ENCODE measurements at regions of chr4 and their contacts with region 1.

Region 1: DNA sequence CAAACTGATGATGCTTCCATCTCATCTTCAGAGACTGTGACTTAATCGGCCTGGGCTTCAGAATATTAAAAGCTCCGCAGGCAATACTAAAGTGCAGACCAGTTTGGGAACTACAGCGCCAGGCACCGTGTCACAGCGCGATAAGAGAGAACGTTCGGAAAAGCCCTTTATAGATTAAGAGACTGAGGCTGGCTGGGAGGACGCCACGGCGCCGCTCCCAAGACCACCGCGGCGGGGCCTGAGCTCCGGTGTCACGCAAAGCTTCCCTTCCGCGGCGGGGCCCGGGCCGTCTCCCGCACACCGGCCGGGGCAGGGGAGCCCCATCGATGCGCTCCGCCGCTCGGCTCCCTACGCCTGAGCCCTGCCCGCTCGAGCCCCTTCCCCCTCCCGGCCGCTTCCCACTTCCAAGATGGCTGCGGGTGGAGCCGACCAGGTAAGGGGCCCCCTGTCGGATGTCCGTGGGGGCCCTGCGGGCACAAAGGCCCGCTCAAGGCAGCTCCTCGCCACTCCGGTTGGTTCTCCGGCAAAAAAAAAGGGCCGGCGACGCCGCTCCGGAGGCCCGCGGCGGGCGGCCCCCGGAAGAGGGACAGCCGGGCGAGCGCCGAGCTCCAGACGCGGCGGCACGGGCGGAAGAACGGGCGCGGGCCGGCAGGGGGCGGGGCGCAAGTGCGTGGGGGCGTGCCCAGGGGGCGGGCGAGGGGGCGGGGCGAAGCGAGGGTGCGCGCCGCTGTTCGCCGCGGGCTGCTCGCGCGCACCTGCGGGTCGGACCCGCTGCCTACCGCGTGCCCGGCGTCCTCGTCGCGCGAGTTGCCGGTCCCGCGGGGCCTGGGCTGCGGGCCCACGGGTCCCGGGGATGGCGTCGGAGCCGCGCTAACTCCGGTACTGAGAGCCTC is at the start of gene TBC1D14:
- DNase-seq: peak; percentile 93
- ATAC-seq: peak; percentile 86
- H3K4me3 Mint-ChIP-seq: peak within 1 kb of the TSS; percentile 94
- H3K27ac Mint-ChIP-seq: peak within 1 kb of the TSS; percentile 95
- H3K4me1 Mint-ChIP-seq: peaks cover 36% of the 10 kb centered on the region
- H3K27me3 Mint-ChIP-seq: peaks cover 6% of the 10 kb centered on the region
- total RNA-seq, gene TBC1D14: 44.5 to 52.3 TPM

Region 2: GRCh38 chr4:6716018-6716911 is 193.1 kb before region 1 on chr4 and contains the start of gene BLOC1S4:
- POLR2A ChIA-PET with region 1: interaction called, 19 read pairs
- DNase-seq: peak; percentile 95
- ATAC-seq: peak; percentile 80
- H3K4me3 Mint-ChIP-seq: peak within 1 kb of the TSS; percentile 90
- H3K27ac Mint-ChIP-seq: peak within 1 kb of the TSS; percentile 95
- H3K4me1 Mint-ChIP-seq: peaks cover 25% of the 10 kb centered on the region
- H3K27me3 Mint-ChIP-seq: peaks cover 2% of the 10 kb centered on the region
- total RNA-seq, gene BLOC1S4: 23.9 to 24.3 TPM

Region 3: GRCh38 chr4:6840062-6840976 is 69.0 kb before region 1 on chr4:
- POLR2A ChIA-PET with region 1: no interaction called
- DNase-seq: no peak
- ATAC-seq: no peak
- H3K4me3 Mint-ChIP-seq: no peak overlapping the region
- H3K27ac Mint-ChIP-seq: no peak overlapping the region
- H3K4me1 Mint-ChIP-seq: peaks cover 2% of the 10 kb centered on the region
- H3K27me3 Mint-ChIP-seq: no peaks in the 10 kb centered on the region

Region 4: DNA sequence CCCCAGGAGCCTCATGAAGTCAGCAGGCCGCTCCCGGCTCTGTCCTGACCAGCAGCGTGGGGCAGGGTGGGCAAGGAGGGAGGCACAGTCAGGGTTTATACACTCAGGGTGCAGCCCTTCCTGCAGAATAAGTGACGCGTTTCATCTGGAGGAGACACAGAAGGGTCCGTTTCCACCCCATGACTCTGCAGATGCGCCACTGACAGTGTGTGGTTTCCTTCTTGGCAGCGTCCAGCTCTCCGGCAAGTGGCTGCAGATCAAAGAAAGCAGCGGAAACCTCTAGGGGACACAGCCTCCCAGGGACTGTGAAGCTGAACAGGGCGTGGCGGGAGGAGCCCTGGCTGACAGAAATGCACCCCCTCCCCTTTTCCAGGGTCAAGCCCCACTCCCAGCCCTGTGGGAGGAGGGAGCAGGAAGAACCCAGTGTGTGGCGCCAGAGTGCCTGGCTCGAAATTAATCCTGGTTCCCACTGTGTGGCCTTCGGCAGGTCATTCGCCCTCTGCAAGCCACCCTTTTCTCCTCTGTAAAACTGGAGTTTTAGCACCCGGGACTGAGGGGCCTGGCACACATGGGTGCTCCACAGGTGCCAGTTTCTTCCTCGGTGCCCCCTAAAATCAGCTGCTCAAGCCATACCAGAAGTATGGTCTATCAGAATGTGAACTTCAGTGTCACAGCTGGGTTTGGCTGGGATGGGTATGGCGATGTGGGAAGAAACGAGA is 17.0 kb before region 1 on chr4:
- POLR2A ChIA-PET with region 1: interaction called, 19 read pairs
- DNase-seq: peak; percentile 61
- ATAC-seq: peak; percentile 90
- H3K4me3 Mint-ChIP-seq: peak overlapping the region; percentile 77
- H3K27ac Mint-ChIP-seq: peak overlapping the region; percentile 88
- H3K4me1 Mint-ChIP-seq: peaks cover 25% of the 10 kb centered on the region
- H3K27me3 Mint-ChIP-seq: no peaks in the 10 kb centered on the region

Region 5: GRCh38 chr4:6898763-6899162 is 10.6 kb before region 1 on chr4:
- POLR2A ChIA-PET with region 1: interaction called, 70 read pairs
- DNase-seq: no peak
- ATAC-seq: peak; percentile 10
- H3K4me3 Mint-ChIP-seq: peak overlapping the region; percentile 68
- H3K27ac Mint-ChIP-seq: peak overlapping the region; percentile 95
- H3K4me1 Mint-ChIP-seq: peaks cover 24% of the 10 kb centered on the region
- H3K27me3 Mint-ChIP-seq: no peaks in the 10 kb centered on the region

Region 6: GRCh38 chr4:6926681-6927478 is 17.6 kb after region 1 on chr4:
- POLR2A ChIA-PET with region 1: interaction called, 23 read pairs
- DNase-seq: peak; percentile 54
- ATAC-seq: peak; percentile 78
- H3K4me3 Mint-ChIP-seq: peak overlapping the region; percentile 59
- H3K27ac Mint-ChIP-seq: peak overlapping the region; percentile 65
- H3K4me1 Mint-ChIP-seq: peaks cover 54% of the 10 kb centered on the region
- H3K27me3 Mint-ChIP-seq: no peaks in the 10 kb centered on the region

Region 7: GRCh38 chr4:6986781-6987587 is 77.7 kb after region 1 on chr4:
- POLR2A ChIA-PET with region 1: interaction called, 20 read pairs
- DNase-seq: peak; percentile 95
- ATAC-seq: peak; percentile 89
- H3K4me3 Mint-ChIP-seq: peak overlapping the region; percentile 92
- H3K27ac Mint-ChIP-seq: peak overlapping the region; percentile 92
- H3K4me1 Mint-ChIP-seq: peaks cover 58% of the 10 kb centered on the region
- H3K27me3 Mint-ChIP-seq: no peaks in the 10 kb centered on the region

Region 8: DNA sequence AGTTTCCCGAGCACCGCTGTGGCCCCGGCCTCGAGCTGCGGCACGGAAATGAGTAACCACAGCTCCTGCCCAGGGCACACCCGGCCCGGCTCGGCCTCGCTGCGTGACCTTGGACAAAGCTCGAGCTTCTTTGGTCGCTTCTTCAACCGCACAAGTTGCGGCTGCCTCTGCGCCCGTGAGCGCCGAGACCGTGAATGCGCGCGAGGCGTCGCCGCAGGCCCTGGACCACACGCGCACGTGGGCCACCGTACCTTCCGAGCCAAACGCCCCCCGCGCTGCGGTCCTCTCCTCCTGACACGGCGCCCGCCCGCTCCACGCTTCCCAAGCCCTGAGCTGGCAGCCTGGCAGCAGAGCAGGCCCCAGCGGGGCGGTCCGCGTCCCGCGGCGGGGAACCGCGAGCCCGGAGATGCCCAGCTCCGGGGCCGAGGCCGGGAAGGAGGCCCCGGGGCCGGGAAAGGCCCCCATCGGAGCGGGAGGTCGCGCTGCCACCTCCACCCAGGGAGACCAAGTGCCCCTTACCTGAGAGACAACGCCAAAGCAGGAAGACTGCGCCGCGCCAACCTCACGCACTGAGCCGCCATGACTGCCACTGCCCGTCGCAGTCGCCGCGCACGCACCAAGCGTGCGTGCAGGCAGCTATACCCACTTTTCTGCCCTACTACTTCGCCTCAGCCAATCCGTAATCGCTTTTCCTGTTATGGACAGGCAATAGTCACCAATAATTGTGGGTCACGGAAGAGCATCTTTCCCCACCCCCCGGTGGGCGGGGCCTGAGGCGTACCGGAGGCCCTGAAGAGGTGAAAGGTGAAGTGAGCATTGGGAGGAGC is 158.3 kb after region 1 on chr4 and contains the start of gene GRPEL1:
- POLR2A ChIA-PET with region 1: interaction called, 24 read pairs
- DNase-seq: peak; percentile 100
- ATAC-seq: peak; percentile 96
- H3K4me3 Mint-ChIP-seq: peak within 1 kb of the TSS; percentile 96
- H3K27ac Mint-ChIP-seq: peak within 1 kb of the TSS; percentile 94
- H3K4me1 Mint-ChIP-seq: peaks cover 32% of the 10 kb centered on the region
- H3K27me3 Mint-ChIP-seq: peaks cover 6% of the 10 kb centered on the region
- total RNA-seq, gene GRPEL1: 36.3 to 37.9 TPM